Activated T-helper 1 cell treated with anti-CD3 and anti-CD28 coated beads, Interleukin-12 subunit alpha, Interleukin-12 subunit beta, Interleukin-2, Interleukin-4 antibody, amounts not matched to agents 30 ng/mL and 10 ng/mL and 1 ng/mL, durations not matched to agents 14 hours and 24 hours and 36 hours (primary cell): ENCODE measurements at regions of chr1 and their contacts with region 1.

Region 1: DNA sequence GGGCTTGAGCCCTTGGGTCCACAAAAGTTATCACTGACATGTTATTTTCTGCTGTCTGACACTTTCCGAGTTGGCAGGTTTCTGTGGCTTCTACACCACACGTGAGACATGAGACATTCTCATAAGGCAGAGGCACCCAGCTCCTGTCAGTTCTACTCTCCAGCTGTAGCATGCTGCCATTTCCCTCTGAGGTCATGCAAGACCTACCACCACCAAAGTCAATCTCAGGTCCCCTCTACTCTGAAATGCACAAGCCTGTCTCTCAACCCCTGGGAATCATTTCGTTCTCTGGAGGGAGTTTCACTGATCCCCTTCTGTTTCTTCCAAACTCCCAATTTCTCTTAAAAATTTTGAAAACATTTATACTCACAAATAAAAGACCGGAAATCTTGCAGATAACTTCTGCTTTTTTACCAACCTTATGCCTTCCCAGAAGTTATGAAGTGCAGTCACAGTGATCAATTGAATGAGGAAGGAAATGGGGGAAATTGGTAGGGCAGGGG is 39.5 kb upstream of the CR2 start:
- DNase-seq: no peak
- H3K4me3 Mint-ChIP-seq: no peak overlapping the region
- H3K27ac Mint-ChIP-seq: peak overlapping the region; percentile 35
- H3K4me1 Mint-ChIP-seq: peaks cover 33% of the 10 kb centered on the region
- H3K27me3 Mint-ChIP-seq: peaks cover 4% of the 10 kb centered on the region

Region 2: GRCh38 chr1:206445116-206445515 is 969.5 kb before region 1 on chr1:
- intact Hi-C with region 1: no loop called
- DNase-seq: no peak
- H3K4me3 Mint-ChIP-seq: no peak overlapping the region
- H3K27ac Mint-ChIP-seq: no peak overlapping the region
- H3K4me1 Mint-ChIP-seq: peaks cover 20% of the 10 kb centered on the region
- H3K27me3 Mint-ChIP-seq: no peaks in the 10 kb centered on the region

Region 3: DNA sequence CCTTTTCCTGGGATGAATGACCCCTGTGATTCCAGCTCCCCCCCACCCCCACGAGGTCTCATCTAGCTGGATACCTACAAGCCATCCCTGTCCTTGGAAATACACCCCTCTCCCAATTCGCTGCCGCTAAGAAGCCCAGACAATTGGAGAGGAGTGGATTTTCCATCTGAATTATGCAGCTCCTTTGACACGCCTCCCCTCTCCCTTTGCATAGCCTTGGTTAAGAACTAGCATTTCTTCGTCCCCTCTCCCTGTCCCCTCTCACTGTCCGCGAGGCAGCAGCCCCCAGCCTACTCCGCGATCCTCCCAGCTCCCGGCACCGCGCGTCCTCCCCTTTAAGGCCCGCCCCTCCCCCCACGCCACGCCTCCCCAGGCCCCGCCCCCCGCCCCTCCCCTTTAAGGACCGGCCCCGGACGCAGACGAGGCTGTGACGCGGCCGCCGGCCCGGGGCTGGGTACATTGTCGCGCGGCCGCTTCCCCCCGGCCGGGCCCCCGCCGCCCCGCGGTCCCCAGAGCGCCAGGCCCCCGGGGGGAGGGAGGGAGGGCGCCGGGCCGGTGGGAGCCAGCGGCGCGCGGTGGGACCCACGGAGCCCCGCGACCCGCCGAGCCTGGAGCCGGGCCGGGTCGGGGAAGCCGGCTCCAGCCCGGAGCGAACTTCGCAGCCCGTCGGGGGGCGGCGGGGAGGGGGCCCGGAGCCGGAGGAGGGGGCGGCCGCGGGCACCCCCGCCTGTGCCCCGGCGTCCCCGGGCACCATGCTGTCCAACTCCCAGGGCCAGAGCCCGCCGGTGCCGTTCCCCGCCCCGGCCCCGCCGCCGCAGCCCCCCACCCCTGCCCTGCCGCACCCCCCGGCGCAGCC is 730.0 kb before region 1 on chr1 and contains the start of gene MAPKAPK2:
- intact Hi-C with region 1: no loop called
- DNase-seq: peak; percentile 69
- H3K4me3 Mint-ChIP-seq: peak within 1 kb of the TSS; percentile 98
- H3K27ac Mint-ChIP-seq: peak within 1 kb of the TSS; percentile 96
- H3K4me1 Mint-ChIP-seq: peaks cover 72% of the 10 kb centered on the region
- H3K27me3 Mint-ChIP-seq: peaks cover 7% of the 10 kb centered on the region
- total RNA-seq, gene MAPKAPK2: 117 and 120 TPM in 2 replicates

Region 4: GRCh38 chr1:207389740-207390464 is 24.8 kb before region 1 on chr1:
- intact Hi-C with region 1: loop called (anchors 1 kb)
- DNase-seq: no peak
- H3K4me3 Mint-ChIP-seq: no peak overlapping the region
- H3K27ac Mint-ChIP-seq: peak overlapping the region; percentile 81
- H3K4me1 Mint-ChIP-seq: peaks cover 7% of the 10 kb centered on the region
- H3K27me3 Mint-ChIP-seq: no peaks in the 10 kb centered on the region

Region 5: GRCh38 chr1:207454046-207454964 is 39.6 kb after region 1 on chr1 and contains the start of gene CR2:
- intact Hi-C with region 1: loop called (anchors 2 kb)
- DNase-seq: no peak
- H3K4me3 Mint-ChIP-seq: peak within 1 kb of the TSS; percentile 42
- H3K27ac Mint-ChIP-seq: no peak within 1 kb of the TSS
- H3K4me1 Mint-ChIP-seq: peaks cover 10% of the 10 kb centered on the region
- H3K27me3 Mint-ChIP-seq: peaks cover 49% of the 10 kb centered on the region
- total RNA-seq, gene CR2: not detected in 2 replicates

Region 6: DNA sequence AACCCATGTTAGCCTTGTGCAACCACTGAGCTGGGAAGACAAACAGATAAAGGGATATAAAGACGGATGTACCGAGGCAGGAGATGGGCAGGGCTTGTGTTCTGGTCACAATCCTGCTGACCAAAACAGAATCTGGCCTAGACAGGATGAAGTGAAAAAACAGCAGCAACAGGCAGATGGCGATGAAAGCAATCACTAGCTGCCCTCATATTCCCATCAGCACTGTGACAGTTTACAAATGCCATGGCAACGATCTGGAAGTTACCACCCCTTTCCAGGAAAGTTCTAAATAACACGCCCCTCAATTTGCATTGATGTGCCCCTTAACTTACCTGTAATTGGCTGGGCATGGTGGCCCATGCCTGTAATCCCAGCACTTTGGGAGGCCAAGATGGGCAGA is 296.6 kb after region 1 on chr1:
- intact Hi-C with region 1: no loop called
- DNase-seq: no peak
- H3K4me3 Mint-ChIP-seq: no peak overlapping the region
- H3K27ac Mint-ChIP-seq: no peak overlapping the region
- H3K4me1 Mint-ChIP-seq: no peaks in the 10 kb centered on the region
- H3K27me3 Mint-ChIP-seq: peaks cover 4% of the 10 kb centered on the region